Mammary epithelial cell (primary cell): ENCODE measurements at regions of chr2 and their contacts with region 1.

Region 1: DNA sequence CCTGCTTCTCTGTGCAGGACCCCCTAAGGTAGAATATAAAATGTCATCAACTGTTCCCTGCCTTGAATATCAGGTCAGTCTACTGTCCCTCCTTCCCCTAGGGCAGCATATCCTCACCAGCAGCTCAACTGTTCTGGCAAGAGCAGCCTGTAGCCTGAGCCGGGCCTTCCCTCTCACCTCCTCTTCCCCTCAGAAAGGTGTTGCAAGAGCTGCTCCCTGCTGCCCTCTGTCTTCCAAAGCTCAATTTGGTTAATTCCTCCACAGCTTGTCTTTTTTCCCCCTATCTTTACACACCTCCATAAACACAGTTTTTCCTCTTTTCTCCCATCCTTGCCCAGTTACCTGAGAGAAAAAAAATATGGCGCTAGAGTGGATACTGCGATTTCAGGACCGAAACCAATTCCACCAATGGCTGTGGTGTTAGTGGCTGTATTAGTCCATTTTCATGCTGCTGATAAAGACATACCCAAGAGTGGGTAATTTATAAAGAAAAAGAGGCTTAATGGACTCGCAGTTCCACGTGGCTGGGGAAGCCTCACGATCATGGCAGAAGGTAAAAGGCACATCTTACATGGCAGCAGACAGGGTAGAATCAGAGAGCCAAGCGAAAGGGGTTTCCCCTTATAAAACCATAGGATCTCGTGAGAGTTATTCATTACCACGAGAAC is 184.7 kb downstream of the MREG start:
- DNase-seq: peak; percentile 67
- H3K4me3 ChIP-seq: no peak overlapping the region
- H3K27ac ChIP-seq: no peak overlapping the region
- H3K4me1 ChIP-seq: peaks cover 21% of the 10 kb centered on the region
- H3K27me3 ChIP-seq: no peaks in the 10 kb centered on the region
- CTCF ChIP-seq: peak; percentile 64 to 82

Region 2: GRCh38 chr2:215435809-215436704 is 392.6 kb before region 1 on chr2 and contains the start of gene FN1:
- CTCF ChIA-PET with region 1: no interaction called
- dilution Hi-C with region 1: no loop called
- in situ Hi-C with region 1: no loop called
- intact Hi-C with region 1: loop called (anchors 1 kb)
- DNase-seq: peak; percentile 96
- H3K4me3 ChIP-seq: peak within 1 kb of the TSS; percentile 65 to 89 (median 85)
- H3K27ac ChIP-seq: peak within 1 kb of the TSS; percentile 97
- H3K4me1 ChIP-seq: peaks cover 46% of the 10 kb centered on the region
- H3K27me3 ChIP-seq: no peaks in the 10 kb centered on the region
- CTCF ChIP-seq: no peak
- total RNA-seq, gene FN1: 11,348 to 20,313 TPM

Region 3: DNA sequence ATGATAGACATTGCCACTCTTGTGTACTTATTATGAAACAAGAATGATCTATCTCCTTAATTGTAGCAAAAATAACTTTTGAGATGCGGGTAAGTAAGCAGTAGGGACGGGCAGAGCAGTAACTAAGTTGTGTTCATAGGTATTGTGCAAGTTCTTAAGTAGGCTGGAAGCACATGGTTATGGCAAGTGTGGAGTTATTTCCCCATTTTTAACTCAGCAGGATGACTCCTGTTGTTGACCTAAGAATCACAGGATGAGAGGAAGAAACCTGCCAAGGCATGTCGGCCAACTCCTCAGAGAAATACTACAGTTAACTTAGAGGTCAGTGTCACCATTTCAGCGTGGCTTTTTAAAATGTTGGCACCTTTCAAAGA is 341.7 kb before region 1 on chr2:
- CTCF ChIA-PET with region 1: no interaction called
- dilution Hi-C with region 1: no loop called
- in situ Hi-C with region 1: no loop called
- intact Hi-C with region 1: no loop called
- DNase-seq: peak; percentile 94
- H3K4me3 ChIP-seq: no peak overlapping the region
- H3K27ac ChIP-seq: peak overlapping the region; percentile 66
- H3K4me1 ChIP-seq: peaks cover 16% of the 10 kb centered on the region
- H3K27me3 ChIP-seq: no peaks in the 10 kb centered on the region
- CTCF ChIP-seq: no peak

Region 4: GRCh38 chr2:215531284-215531683 is 297.4 kb before region 1 on chr2:
- CTCF ChIA-PET with region 1: no interaction called
- dilution Hi-C with region 1: no loop called
- in situ Hi-C with region 1: no loop called
- intact Hi-C with region 1: loop called (anchors 5 kb)
- DNase-seq: peak; percentile 84
- H3K4me3 ChIP-seq: no peak overlapping the region
- H3K27ac ChIP-seq: peak overlapping the region; percentile 98
- H3K4me1 ChIP-seq: peaks cover 51% of the 10 kb centered on the region
- H3K27me3 ChIP-seq: no peaks in the 10 kb centered on the region
- CTCF ChIP-seq: no peak

Region 5: DNA sequence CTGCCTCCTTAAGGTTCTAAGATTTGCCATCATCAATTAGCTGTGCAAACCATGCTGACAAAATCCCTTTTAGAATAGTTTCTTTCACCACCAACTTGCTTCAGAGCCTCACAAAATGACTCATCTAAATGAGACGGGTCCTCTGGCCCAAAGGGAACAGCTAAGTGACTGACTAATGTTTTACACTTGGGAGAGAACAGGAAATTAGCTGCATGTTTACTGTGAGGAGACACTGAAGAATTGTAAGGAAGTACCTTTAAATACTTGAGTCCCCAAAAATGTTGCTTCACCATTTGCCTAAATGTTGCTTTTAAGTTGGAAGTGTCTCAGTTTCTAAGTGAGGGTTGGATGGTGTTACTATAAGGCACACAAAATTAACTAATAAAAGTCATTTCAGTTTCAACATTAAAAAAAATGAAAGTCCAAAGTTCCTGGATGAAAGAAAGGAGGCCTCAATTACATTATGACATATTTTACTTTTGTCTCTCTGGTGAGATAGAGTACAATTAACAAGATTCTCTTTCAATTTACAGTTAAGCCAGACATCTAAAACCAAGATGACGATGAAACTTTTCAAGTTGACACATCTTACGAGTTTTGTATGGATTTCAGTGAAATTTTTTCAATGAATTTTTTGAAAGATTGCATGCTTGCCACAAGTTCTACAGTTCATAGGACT is 163.7 kb before region 1 on chr2:
- CTCF ChIA-PET with region 1: no interaction called
- dilution Hi-C with region 1: no loop called
- in situ Hi-C with region 1: no loop called
- intact Hi-C with region 1: loop called (anchors 5 kb)
- DNase-seq: peak; percentile 96
- H3K4me3 ChIP-seq: no peak overlapping the region
- H3K27ac ChIP-seq: peak overlapping the region; percentile 76
- H3K4me1 ChIP-seq: peaks cover 49% of the 10 kb centered on the region
- H3K27me3 ChIP-seq: no peaks in the 10 kb centered on the region
- CTCF ChIP-seq: no peak

Region 6: DNA sequence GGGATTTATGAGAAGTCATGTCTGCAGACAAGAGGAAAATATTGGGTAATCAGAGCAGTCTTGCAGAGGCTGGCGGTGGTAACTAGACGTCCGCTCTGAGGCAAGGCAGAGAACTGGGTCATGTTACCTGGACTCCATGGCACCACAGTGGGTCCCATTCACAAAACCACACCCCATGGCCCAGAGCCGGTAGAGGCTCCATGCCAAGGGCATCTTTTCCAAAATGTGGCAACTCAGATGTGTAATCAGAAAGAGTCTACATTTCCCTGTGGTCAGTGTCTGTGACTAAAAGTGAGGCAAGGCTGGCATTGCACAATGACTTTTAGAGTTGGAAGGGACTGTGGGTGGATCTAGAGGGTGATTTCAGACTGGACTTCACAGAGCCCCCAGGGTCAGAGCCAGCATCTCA is 71.6 kb after region 1 on chr2:
- CTCF ChIA-PET with region 1: no interaction called
- dilution Hi-C with region 1: loop called (anchors 5 kb)
- in situ Hi-C with region 1: no loop called
- intact Hi-C with region 1: loop called (anchors 5 kb)
- DNase-seq: peak; percentile 98
- H3K4me3 ChIP-seq: no peak overlapping the region
- H3K27ac ChIP-seq: no peak overlapping the region
- H3K4me1 ChIP-seq: peaks cover 26% of the 10 kb centered on the region
- H3K27me3 ChIP-seq: no peaks in the 10 kb centered on the region
- CTCF ChIP-seq: no peak